Psoas muscle (tissue), 8 donors: ENCODE measurements at regions of chr7 and their contacts with region 1.

Region 1: GRCh38 chr7:133912916-133913697 is 214.0 kb upstream of the LRGUK start:
- DNase-seq: no peak
- ATAC-seq: peak in 2 of 4 donors; percentile 49 to 79
- H3K4me3 ChIP-seq: no peak overlapping the region
- H3K27ac ChIP-seq: no peak overlapping the region
- H3K4me1 ChIP-seq: no peaks in the 10 kb centered on the region
- H3K27me3 ChIP-seq: no peaks in the 10 kb centered on the region
- CTCF ChIP-seq: no peak

Region 2: DNA sequence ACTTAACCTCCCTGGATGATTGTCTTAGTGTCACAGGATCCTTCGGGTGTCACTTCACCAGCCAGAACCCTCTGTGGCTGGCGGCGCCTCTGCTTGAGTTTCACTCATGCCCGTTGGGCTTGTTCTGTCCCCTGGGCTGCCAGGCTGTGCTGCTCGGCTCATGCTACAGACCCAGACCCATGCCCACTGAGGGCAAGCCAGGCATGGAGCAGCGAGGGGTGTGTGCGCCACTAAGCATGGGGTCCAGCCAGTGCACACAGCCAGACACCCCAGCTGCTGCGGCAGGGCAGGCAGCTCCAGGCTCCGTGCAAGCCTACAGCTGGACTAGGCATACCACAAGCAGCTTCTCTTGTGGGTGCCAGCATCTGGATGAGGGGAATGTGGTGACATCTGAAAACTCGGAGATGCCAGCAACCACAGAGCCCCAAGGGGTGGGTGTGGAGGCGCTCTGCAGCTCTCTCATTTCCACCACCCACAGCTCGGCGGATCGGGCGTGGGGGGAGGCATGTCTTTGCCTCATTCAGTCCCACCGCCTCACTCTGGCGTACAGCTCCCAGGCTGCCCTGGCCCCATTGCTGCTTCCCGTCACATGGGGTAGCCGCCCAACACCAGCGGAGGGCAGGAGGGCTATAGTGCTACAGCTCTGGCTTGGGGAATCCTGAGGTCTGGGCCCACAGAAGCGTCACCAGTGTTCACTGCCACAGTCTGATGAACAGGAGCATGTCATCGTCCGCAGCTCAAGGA is 55.6 kb before region 1 on chr7:
- intact Hi-C with region 1: loop called in 1 of 2 experiments (anchors 2 kb)
- DNase-seq: no peak
- ATAC-seq: no peak
- H3K4me3 ChIP-seq: no peak overlapping the region
- H3K27ac ChIP-seq: no peak overlapping the region
- H3K4me1 ChIP-seq: peaks cover 13% of the 10 kb centered on the region
- H3K27me3 ChIP-seq: no peaks in the 10 kb centered on the region
- CTCF ChIP-seq: no peak